ENCODE measurements at regions of chr12 and their contacts with region 1.

Region 1: GRCh38 chr12:1650260-1650977 is 21.4 kb downstream of the WNT5B start:
- DNase-seq: no peak
- ATAC-seq: no peak
- H3K4me3 Mint-ChIP-seq: no peak overlapping the region
- H3K27ac Mint-ChIP-seq: no peak overlapping the region
- H3K4me1 Mint-ChIP-seq: peaks cover 11% of the 10 kb centered on the region
- H3K27me3 Mint-ChIP-seq: peaks cover 42% of the 10 kb centered on the region

Region 2: GRCh38 chr12:1634590-1635191 is 15.7 kb before region 1 on chr12:
- CTCF ChIA-PET with region 1: interaction called, 41 read pairs
- DNase-seq: peak; percentile 71
- ATAC-seq: peak; percentile 77
- H3K4me3 Mint-ChIP-seq: no peak overlapping the region
- H3K27ac Mint-ChIP-seq: no peak overlapping the region
- H3K4me1 Mint-ChIP-seq: peaks cover 6% of the 10 kb centered on the region
- H3K27me3 Mint-ChIP-seq: peaks cover 61% of the 10 kb centered on the region

Region 3: GRCh38 chr12:1695886-1696670 is 45.7 kb after region 1 on chr12:
- CTCF ChIA-PET with region 1: interaction called, 12 read pairs
- DNase-seq: no peak
- ATAC-seq: no peak
- H3K4me3 Mint-ChIP-seq: no peak overlapping the region
- H3K27ac Mint-ChIP-seq: no peak overlapping the region
- H3K4me1 Mint-ChIP-seq: peaks cover 52% of the 10 kb centered on the region
- H3K27me3 Mint-ChIP-seq: no peaks in the 10 kb centered on the region

Region 4: DNA sequence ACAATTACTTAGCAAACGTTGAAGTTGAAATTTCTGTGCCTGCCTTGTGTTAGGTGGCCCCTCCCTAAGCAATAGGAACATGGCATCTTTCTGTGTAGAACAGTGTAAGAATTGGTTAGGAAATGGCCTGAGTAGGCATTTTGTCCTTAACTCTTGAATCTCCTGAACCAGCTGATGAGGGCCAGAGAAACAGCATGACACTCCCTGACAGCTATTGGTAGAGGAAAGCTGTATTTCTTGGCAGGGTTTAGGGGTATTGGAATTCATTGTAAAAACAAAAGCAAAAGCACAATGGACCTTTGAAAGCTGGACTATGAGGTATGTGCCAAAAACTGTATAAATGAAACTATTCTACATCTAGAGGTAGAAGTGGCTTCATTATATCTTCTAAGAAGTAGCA is 129.4 kb after region 1 on chr12:
- CTCF ChIA-PET with region 1: interaction called, 12 read pairs
- DNase-seq: no peak
- ATAC-seq: no peak
- H3K4me3 Mint-ChIP-seq: no peak overlapping the region
- H3K27ac Mint-ChIP-seq: no peak overlapping the region
- H3K4me1 Mint-ChIP-seq: peaks cover 6% of the 10 kb centered on the region
- H3K27me3 Mint-ChIP-seq: no peaks in the 10 kb centered on the region

Measured in activated CD8-positive, alpha-beta memory T cell treated with anti-CD3 and anti-CD28 coated beads, Interleukin-2, amount 10 ng/mL, durations not matched to agents 7 days and 5 days (primary cell).